ENCODE measurements at regions of chr17 and their contacts with region 1.

Region 1: DNA sequence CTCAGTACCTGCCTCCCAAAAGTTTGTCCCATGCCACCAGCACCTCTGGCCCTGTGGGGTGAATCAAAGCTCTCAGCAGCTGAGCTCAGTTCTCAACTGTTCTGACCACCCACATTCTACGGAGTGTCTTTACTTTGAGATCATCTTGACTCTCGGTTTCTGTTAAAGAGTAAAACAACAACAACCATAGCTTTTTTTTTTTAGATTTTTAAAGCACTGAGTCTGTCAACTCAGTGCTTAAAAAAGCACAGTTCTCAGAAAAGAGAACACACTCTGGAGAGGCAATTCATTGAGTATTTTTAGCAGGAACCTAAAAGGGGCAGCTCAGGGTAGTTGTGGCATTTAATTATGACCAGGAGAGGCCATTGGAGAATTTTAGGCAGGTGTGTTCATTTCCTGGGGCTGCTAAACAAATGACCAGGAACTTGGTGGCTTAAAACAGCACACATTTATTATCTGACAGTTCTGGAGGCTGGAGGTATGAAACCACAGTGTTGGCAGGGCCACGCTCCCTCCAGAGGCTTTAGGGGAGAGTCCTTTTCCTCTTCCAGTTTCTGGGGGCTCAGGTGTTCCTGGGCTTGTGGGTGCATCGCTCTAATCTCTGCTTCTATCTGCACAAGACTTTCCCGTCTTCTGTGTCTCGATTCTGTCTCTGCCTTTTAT is 6.7 kb upstream of the WFIKKN2 start:
- DNase-seq: peak; percentile 78
- CTCF ChIP-seq: no peak

Region 2: GRCh38 chr17:50798424-50799288 is 30.0 kb before region 1 on chr17:
- CTCF ChIA-PET with region 1: no interaction called
- POLR2A ChIA-PET with region 1: no interaction called
- DNase-seq: no peak
- CTCF ChIP-seq: no peak

Region 3: GRCh38 chr17:50816771-50817751 is 11.6 kb before region 1 on chr17:
- CTCF ChIA-PET with region 1: interaction called, 61 read pairs
- POLR2A ChIA-PET with region 1: no interaction called
- DNase-seq: peak; percentile 71
- CTCF ChIP-seq: peak; percentile 66